ENCODE measurements at regions of chr17 and their contacts with region 1.

Region 1: GRCh38 chr17:4948931-4949320 is 596 bp upstream of the PFN1 start:
- DNase-seq: peak; percentile 77
- H3K4me3 Mint-ChIP-seq: peak overlapping the region; percentile 97
- H3K27ac Mint-ChIP-seq: peak overlapping the region; percentile 100
- H3K4me1 Mint-ChIP-seq: peaks cover 49% of the 10 kb centered on the region
- H3K27me3 Mint-ChIP-seq: peaks cover 2% of the 10 kb centered on the region

Region 2: DNA sequence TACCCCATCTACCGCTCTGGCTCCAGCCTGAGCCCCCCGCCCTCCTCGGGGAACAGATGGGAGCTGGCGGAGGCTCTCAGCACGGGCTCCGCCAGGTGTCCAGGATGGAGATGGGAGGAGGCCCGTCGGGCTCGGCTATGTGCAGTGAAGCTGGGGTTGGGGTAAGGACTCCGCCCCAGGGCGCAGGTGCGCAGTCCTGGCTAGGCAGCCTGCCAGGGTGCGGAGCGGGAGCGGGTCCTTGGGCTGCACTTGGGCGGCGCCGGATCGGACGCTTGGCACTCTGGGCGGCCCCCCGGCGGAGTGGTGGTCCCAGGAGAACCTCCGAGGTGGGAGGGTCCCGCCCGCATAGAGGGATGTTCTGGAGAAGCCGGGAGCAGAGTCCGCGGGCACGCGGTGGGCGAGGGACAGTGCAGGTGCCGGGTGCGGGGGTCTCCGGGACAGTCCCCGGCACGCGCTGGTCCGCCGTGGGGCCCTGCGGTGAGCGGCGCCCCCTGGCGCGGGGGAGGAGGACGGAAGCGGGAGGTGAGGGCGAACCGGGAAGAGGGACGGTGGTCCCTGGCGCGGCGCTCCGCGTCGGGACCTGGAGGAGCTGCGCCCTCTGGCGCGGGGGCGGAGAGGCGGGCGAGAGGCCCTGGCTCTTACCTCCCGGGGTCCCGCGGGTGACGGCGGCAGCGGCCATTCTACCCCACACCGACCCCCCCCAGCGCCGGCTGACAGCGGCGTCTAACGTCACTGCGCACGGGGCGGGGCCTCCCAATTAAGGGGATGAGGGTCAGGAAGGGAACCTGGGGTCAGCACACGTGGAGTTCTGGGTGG is 38.2 kb after region 1 on chr17 and contains the start of gene CAMTA2:
- intact Hi-C with region 1: loop called (anchors 1 kb)
- DNase-seq: peak; percentile 82
- H3K4me3 Mint-ChIP-seq: peak within 1 kb of the TSS; percentile 95
- H3K27ac Mint-ChIP-seq: peak within 1 kb of the TSS; percentile 89
- H3K4me1 Mint-ChIP-seq: peaks cover 39% of the 10 kb centered on the region
- H3K27me3 Mint-ChIP-seq: no peaks in the 10 kb centered on the region
- total RNA-seq, gene CAMTA2: 98.5 and 103 TPM in 2 replicates

Measured in activated T-helper 1 cell treated with anti-CD3 and anti-CD28 coated beads, Interleukin-12 subunit alpha, Interleukin-12 subunit beta, Interleukin-2, Interleukin-4 antibody, amounts not matched to agents 30 ng/mL and 10 ng/mL and 1 ng/mL, durations not matched to agents 14 hours and 24 hours and 36 hours (primary cell).